ENCODE measurements at regions of chrX and their contacts with region 1.

Region 1: GRCh38 chrX:48021026-48021900 is 14.5 kb downstream of the SPACA5 start:
- DNase-seq: peak; percentile 68
- ATAC-seq: peak; percentile 87
- H3K4me3 ChIP-seq: peak overlapping the region; percentile 71
- H3K27ac ChIP-seq: peak overlapping the region; percentile 62
- H3K4me1 ChIP-seq: no peaks in the 10 kb centered on the region
- H3K27me3 ChIP-seq: no peaks in the 10 kb centered on the region
- CTCF ChIP-seq: no peak

Region 2: GRCh38 chrX:47836164-47837072 is 184.8 kb before region 1 on chrX and contains the start of gene ZNF81:
- CTCF ChIA-PET with region 1: no interaction called
- POLR2A ChIA-PET with region 1: no interaction called
- intact Hi-C with region 1: loop called (anchors 1 kb)
- DNase-seq: peak; percentile 97
- ATAC-seq: peak; percentile 96
- H3K4me3 ChIP-seq: peak within 1 kb of the TSS; percentile 87
- H3K27ac ChIP-seq: peak within 1 kb of the TSS; percentile 43; the same call in 1 of the 2 replicates
- H3K4me1 ChIP-seq: peaks cover 12% of the 10 kb centered on the region
- H3K27me3 ChIP-seq: no peaks in the 10 kb centered on the region
- CTCF ChIP-seq: no peak
- total RNA-seq, gene ZNF81: 4.4 and 9.5 TPM in 2 replicates

Region 3: DNA sequence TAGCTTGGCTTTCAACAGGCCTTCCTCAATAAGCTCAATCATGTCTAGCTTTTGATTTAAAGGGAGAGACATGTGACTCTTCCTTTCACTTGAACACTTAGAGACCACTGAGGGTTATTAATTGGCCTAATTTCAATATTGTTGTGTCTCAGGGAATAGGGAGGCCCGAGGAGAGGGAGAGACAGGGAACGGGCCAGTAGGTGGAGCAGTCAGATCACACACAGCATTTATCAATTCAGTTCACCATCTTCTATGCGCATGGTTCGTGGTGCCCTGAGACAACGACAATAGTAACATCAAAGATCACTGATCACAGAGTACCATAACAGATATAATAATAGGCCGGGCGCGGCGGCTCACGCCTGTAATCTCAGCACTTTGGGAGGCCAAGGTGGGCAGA is 166.8 kb before region 1 on chrX:
- CTCF ChIA-PET with region 1: no interaction called
- POLR2A ChIA-PET with region 1: no interaction called
- intact Hi-C with region 1: loop called (anchors 1 kb)
- DNase-seq: peak; percentile 30
- ATAC-seq: peak; percentile 63
- H3K4me3 ChIP-seq: no peak overlapping the region
- H3K27ac ChIP-seq: no peak overlapping the region
- H3K4me1 ChIP-seq: no peaks in the 10 kb centered on the region
- H3K27me3 ChIP-seq: no peaks in the 10 kb centered on the region
- CTCF ChIP-seq: peak; percentile 53

Region 4: DNA sequence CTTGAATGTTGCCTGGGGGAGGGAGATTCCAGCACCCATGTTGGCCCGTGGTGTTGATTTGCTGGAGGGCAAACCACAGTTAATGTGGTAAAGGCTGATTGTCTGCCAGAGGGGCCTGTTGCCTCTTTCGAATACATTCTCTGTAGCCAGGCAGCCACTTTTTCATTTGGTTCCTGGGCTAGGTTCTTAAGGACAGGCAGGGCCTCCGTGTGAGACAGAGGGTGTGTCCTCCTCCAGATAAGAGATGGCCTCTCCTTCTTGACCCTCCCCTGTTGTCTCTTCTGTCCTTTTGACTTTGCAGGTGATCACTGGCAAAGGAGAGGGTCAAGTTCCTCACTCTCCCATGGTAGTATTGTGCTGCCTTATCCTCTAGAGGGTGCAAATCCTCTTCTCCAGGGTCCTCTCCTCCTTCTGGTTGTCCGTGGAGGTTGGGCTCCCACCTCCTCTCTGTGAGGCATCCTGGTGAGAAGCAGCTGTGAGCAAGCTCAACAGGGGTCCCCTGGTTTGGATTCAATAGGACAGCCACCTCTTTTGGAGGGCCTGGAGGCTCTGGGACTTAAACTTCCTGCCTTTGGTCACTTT is 62.4 kb before region 1 on chrX:
- CTCF ChIA-PET with region 1: no interaction called
- POLR2A ChIA-PET with region 1: no interaction called
- intact Hi-C with region 1: loop called (anchors 5 kb)
- DNase-seq: peak; percentile 18
- ATAC-seq: no peak
- H3K4me3 ChIP-seq: no peak overlapping the region
- H3K27ac ChIP-seq: no peak overlapping the region
- H3K4me1 ChIP-seq: no peaks in the 10 kb centered on the region
- H3K27me3 ChIP-seq: no peaks in the 10 kb centered on the region
- CTCF ChIP-seq: peak; percentile 38